HepG2 (cell line): ENCODE measurements at regions of chr9 and their contacts with region 1.

Region 1: DNA sequence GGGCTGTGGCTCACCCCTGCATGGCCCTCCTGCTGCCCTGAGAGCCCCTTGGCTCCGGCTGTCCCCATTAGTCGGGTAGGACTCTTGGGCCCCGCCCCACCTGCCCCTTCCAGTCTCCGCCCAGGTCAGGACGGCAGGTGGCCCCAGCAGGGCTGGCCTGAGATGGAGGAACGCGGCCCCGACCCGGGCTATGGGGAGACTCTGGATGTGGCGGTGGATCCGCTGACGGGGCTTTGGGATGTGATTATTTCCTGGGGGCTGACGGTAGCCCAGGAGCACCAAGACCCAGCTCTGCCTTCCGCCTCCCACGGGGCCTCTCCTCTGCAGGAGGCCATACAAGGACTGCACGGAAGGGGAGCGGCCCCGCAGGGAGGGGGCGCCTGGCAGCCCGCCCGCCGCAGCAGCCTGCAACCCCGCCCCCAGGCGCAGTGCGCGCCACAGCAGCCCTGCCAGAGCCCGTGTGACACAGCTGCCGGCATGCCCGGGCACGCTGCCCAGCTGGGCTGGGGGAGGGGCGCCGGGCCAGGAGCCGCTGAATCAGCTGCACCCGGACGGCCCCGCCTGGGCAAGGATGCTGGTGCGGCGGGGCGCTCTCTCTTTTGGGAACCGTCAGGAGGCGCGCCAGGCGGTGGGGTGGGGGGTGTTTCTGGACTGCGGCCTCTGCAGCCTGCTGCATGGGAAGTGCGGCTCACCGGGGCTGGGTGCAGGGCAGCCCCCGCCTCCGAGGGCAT is 9.2 kb downstream of the TMEM250 start:
- DNase-seq: no peak
- ATAC-seq: no peak
- H3K4me3 ChIP-seq: no peak overlapping the region
- H3K27ac ChIP-seq: no peak overlapping the region
- H3K4me1 ChIP-seq: peaks cover 22% of the 10 kb centered on the region
- H3K27me3 ChIP-seq: peaks cover 2 to 14% of the 10 kb centered on the region in 2 experiments
- CTCF ChIP-seq: no peak
- EP300 ChIP-seq: no peak
- POLR2A ChIP-seq: no peak
- RAD21 ChIP-seq: no peak

Region 2: GRCh38 chr9:135961277-135961705 is 148.2 kb before region 1 on chr9 and contains the start of gene UBAC1:
- CTCF ChIA-PET with region 1: no interaction called
- POLR2A ChIA-PET with region 1: no interaction called
- in situ Hi-C with region 1: loop called (anchors 10 kb)
- intact Hi-C with region 1: no loop called
- DNase-seq: peak; percentile 87
- ATAC-seq: peak; percentile 81
- H3K4me3 ChIP-seq: peak within 1 kb of the TSS; percentile 90 to 98 (median 92)
- H3K27ac ChIP-seq: peak within 1 kb of the TSS; percentile 69
- H3K4me1 ChIP-seq: peaks cover 34% of the 10 kb centered on the region
- H3K27me3 ChIP-seq: peaks cover 6 to 25% of the 10 kb centered on the region in 2 experiments; a peak in 3 of 5 replicates
- CTCF ChIP-seq: peak; percentile 62
- EP300 ChIP-seq: no peak
- POLR2A ChIP-seq: no peak
- RAD21 ChIP-seq: 0 out of 2 replicates have a peak, but pooled peaks have one; percentile 9
- total RNA-seq, gene UBAC1: 28.7 and 32.2 TPM in 2 replicates